GM10248 (cell line): ENCODE measurements at regions of chr20 and their contacts with region 1.

Region 1: GRCh38 chr20:3483784-3484183 is 13.0 kb downstream of the ATRN start:
- DNase-seq: no peak
- CTCF ChIP-seq: no peak

Region 2: DNA sequence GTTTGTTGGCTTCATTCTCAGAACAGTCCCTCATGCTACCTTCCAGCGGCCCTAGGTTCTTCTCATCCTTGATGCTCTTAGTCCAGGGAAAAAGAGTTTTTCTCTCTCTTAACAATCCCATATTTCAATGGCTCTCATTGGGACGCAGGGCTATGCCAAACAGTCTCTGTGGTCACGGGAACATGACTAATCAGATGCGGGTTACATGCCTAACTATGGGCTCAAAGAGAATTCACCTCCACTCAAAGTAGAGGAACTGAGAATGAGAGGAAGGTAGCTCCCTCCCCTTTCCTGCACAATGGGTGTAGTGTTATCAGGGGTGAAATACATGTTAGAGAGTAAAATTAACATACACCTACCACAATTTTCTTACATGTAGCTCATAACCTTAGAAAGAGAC is 31.1 kb before region 1 on chr20:
- CTCF ChIA-PET with region 1: no interaction called
- POLR2A ChIA-PET with region 1: no interaction called
- DNase-seq: peak; percentile 37
- CTCF ChIP-seq: no peak

Region 3: GRCh38 chr20:3470627-3471396 is 13.0 kb before region 1 on chr20 and contains the start of gene ATRN:
- CTCF ChIA-PET with region 1: interaction called, 10 read pairs
- POLR2A ChIA-PET with region 1: no interaction called
- DNase-seq: peak; percentile 97
- CTCF ChIP-seq: no peak